ENCODE measurements at regions of chr12 and their contacts with region 1.

Region 1: DNA sequence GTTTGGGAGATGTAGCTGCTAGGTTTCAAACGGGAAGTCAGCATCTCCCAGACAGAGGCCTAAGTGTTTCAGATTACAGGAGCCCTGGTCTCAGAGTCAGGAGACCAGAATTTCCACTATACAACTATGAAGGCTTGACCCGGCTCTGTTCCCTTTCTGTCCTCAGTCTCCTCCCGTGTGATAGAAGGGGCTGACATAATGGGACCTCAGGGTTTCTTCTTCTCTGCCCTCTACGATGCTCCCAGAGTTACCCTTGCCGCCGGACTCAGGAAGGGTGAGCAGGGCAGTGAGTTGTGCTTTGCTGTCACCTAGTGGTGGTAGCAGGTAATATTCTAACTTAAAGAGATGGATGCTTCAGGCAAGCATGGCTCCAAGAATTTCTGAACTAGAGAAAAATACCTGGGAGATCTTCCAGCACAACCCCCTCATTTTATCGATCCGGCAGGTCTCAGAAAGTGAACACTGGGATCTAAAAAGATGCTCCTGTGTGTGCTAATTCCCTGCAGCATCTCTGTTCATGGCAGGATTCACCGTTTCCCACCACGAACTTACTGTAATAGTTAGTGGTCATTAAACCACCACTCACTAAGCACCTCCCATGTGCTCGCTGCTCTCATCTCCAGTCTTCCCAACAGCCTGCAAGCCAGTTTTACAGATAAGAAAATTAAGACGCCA is 84.4 kb downstream of the VWF start:
- DNase-seq: peak; percentile 60
- ATAC-seq: peak; percentile 72
- H3K4me3 Mint-ChIP-seq: no peak overlapping the region
- H3K27ac Mint-ChIP-seq: no peak overlapping the region
- H3K4me1 Mint-ChIP-seq: peaks cover 17% of the 10 kb centered on the region
- H3K27me3 Mint-ChIP-seq: peaks cover 11% of the 10 kb centered on the region
- CTCF ChIP-seq: peak; percentile 79

Region 2: DNA sequence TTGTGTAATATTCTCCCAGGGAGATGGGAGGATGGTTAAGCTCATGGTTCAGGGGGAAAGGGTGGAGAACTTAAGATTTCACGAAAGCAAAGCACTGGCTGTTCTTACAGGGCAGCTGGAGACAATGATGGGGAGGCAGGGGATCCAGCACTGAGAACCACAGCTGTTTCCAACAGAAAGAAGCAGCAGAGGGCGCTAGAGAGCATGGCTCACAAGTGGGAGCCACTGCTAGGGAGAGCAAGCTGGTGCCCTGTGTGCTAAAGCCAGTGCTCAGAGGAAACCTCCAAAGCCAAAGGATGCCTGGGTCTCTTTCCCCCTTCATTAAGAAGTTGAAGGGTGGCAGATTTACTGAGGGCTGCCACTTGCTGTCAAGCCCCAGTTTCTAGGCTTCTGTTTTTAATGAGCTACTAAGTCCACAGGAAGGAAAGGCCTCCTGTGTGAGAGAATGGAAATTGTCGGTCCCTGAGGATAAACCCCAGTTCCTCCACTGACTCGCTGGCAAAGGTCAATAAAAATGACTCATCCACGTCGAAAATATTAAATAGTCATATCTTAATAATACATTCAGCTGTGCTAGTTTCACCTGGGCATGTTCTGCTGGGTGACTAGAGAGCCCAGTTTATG is 294.7 kb before region 1 on chr12:
- CTCF ChIA-PET with region 1: interaction called, 18 read pairs
- POLR2A ChIA-PET with region 1: no interaction called
- DNase-seq: peak; percentile 91
- ATAC-seq: peak; percentile 99
- H3K4me3 Mint-ChIP-seq: no peak overlapping the region
- H3K27ac Mint-ChIP-seq: no peak overlapping the region
- H3K4me1 Mint-ChIP-seq: no peaks in the 10 kb centered on the region
- H3K27me3 Mint-ChIP-seq: no peaks in the 10 kb centered on the region
- CTCF ChIP-seq: peak; percentile 96

Region 3: DNA sequence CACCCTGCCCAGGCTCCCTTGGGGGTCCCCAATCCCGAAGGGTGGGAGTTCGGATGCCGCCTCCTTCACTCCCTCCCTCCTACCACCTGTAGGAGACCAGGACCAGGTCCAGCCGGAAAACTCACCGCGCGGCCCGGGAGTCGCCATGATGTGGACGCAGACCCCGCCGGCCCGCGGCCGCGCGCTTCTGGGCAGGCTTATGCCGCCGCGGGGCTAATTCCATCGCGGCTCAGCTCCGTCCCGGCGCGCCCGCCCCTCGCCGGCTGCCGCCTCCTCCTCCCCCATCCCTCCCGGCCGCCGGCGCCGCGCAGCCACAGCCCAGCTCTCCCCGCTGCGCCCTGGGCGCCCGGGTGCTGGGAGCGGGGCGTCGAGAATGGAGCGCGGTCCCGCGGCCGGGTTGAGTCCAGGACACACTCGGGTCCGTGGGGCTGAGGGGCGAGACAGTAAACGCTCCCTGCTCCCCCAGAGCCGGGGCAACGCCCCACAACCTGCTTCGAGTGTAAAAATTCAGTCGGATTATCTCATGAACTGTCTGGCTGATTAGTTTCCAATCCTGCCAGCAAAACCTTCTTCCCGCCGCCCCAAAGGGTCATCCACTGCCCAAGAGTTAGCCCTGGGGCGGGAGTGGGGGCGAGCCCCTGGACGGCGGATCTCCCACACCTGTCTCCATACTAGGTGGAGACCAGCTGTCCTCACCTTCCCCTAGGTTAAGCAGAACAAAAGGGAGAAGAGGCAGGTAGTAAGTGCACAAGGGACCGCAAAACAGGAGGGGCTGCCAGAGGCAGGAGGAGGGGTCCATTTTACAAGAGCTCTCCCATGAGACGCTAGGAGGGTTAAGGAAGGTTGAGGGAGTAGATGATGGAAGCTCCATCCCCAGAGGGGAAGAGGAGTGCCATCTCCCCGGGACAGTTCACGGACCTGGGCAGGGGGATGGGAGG is 94.7 kb before region 1 on chr12 and contains the start of gene ANO2:
- CTCF ChIA-PET with region 1: interaction called, 22 read pairs
- POLR2A ChIA-PET with region 1: no interaction called
- DNase-seq: peak; percentile 75
- ATAC-seq: peak; percentile 87
- H3K4me3 Mint-ChIP-seq: peak within 1 kb of the TSS; percentile 92
- H3K27ac Mint-ChIP-seq: peak within 1 kb of the TSS; percentile 78
- H3K4me1 Mint-ChIP-seq: peaks cover 27% of the 10 kb centered on the region
- H3K27me3 Mint-ChIP-seq: peaks cover 52% of the 10 kb centered on the region
- CTCF ChIP-seq: no peak
- total RNA-seq, gene ANO2: 2.8 to 4.0 TPM (median 3.1 TPM) in 3 replicates

Region 4: GRCh38 chr12:5982106-5982505 is 57.9 kb before region 1 on chr12:
- CTCF ChIA-PET with region 1: interaction called, 24 read pairs
- POLR2A ChIA-PET with region 1: no interaction called
- DNase-seq: no peak
- ATAC-seq: no peak
- H3K4me3 Mint-ChIP-seq: no peak overlapping the region
- H3K27ac Mint-ChIP-seq: no peak overlapping the region
- H3K4me1 Mint-ChIP-seq: 0 out of 2 replicates have a peak, but pooled peaks cover 4% of the 10 kb centered on the region
- H3K27me3 Mint-ChIP-seq: no peaks in the 10 kb centered on the region
- CTCF ChIP-seq: no peak

Region 5: DNA sequence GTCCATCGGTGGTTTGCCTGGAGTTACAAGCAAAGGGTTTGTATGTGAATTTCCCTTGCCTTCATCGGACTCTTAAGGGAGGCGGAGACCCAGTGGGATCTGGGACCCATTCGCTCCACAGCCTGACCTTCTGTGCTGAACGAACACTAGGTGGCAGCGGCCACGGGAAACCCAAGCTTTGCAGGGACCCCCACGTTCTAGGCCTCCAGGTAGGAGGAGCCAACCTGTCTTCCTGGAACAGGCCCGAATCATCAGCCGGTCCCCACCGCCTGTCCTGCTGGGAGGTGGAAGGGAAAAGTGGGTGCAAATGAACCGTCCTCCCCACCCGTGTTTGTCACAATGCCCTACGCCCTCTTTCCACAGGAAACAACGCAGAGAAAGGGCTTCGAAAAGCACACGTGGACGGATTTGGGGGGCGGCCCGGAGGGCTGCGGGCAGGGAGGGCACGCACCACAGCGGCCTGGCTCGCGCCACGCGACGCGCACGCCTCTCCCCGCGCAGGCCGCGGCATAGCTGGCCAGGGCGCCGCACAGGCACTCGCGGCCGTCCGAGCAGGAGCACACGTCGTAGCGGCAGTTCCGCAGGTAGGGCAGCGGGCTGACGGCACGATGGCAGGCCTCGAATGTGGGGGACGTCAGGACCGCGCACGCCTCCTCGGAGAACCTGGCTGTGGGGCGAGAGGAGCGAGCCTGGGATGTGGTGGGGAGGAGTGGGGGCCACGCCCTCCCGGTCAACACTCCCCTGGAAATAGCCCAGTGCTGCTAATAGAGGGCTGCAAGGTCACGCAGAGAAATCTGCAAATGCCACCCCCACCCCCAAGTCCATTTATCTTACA is 16.6 kb after region 1 on chr12:
- CTCF ChIA-PET with region 1: interaction called, 19 read pairs
- POLR2A ChIA-PET with region 1: no interaction called
- DNase-seq: peak; percentile 70
- ATAC-seq: peak; percentile 79
- H3K4me3 Mint-ChIP-seq: peak overlapping the region; percentile 59
- H3K27ac Mint-ChIP-seq: no peak overlapping the region
- H3K4me1 Mint-ChIP-seq: peaks cover 29% of the 10 kb centered on the region
- H3K27me3 Mint-ChIP-seq: peaks cover 6% of the 10 kb centered on the region
- CTCF ChIP-seq: no peak

Region 6: GRCh38 chr12:6285063-6285477 is 245.0 kb after region 1 on chr12:
- CTCF ChIA-PET with region 1: interaction called, 20 read pairs
- POLR2A ChIA-PET with region 1: no interaction called
- DNase-seq: peak; percentile 73
- ATAC-seq: peak; percentile 88
- H3K4me3 Mint-ChIP-seq: no peak overlapping the region
- H3K27ac Mint-ChIP-seq: no peak overlapping the region
- H3K4me1 Mint-ChIP-seq: peaks cover 20% of the 10 kb centered on the region
- H3K27me3 Mint-ChIP-seq: peaks cover 5% of the 10 kb centered on the region
- CTCF ChIP-seq: peak; percentile 95